ENCODE measurements at regions of chr2 and their contacts with region 1.

Region 1: GRCh38 chr2:70301344-70302194 is at the start of gene FAM136A:
- DNase-seq: peak; percentile 63 to 89 (median 77)
- H3K4me3 ChIP-seq: peak within 1 kb of the TSS; percentile 69 to 99 (median 92)
- H3K27ac ChIP-seq: peak within 1 kb of the TSS in 58 of 59 donors; percentile 13 to 94 (median 82)
- H3K27me3 ChIP-seq: no peaks in the 10 kb centered on the region
- CTCF ChIP-seq: peak; percentile 74 to 99 (median 94)
- total RNA-seq, gene FAM136A: 9.5 to 27.5 (median 18.9) TPM

Region 2: DNA sequence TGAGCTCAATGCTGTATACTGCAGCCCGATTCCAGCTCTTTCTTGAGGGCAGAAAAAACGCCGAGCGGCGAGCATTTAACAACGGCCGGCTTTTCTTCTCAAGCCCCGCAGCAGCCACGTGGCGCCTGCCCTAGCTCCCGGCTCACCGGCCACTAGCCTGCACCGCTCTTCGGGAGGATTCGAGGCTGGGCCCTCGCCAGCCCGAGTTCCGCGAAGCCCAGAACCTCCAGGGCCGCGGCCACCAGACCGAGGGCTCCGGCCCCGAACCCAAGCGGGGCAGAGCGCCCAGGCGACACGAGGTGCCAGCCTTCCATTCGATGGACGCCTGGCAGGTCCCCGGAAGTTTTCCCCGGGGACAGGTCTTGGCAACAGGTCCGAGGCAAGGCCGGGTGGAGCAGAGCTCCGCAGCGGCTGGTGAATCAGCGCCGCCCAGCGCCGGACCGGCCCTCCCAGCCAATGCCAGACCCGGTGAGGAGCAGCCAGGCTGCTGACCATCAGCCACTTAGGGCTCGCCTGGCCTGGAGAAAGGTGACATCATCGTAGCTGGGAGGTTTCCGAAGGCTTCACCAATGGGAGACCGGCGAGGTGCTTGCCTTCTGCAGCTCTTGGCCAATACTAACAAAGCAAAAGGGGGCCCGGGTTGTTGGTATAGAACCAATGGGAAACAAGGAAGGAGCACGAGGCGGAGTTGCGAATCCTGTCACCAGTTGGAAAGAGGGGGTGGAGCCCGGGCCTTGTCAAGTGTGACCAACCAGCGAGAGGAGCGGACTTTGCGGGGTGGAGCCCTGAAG is 387.2 kb before region 1 on chr2:
- intact Hi-C with region 1: loop called (anchors 2 to 5 kb)
- DNase-seq: peak; percentile 91 to 100 (median 100)
- H3K4me3 ChIP-seq: peak overlapping the region; percentile 60 to 99 (median 87)
- H3K27ac ChIP-seq: peak overlapping the region; percentile 89 to 100 (median 99)
- H3K27me3 ChIP-seq: no peaks in the 10 kb centered on the region
- CTCF ChIP-seq: peak in 53 of 56 donors; percentile 13 to 75 (median 52)

Region 3: GRCh38 chr2:70142590-70143313 is 158.8 kb before region 1 on chr2:
- intact Hi-C with region 1: loop called in 1 of 2 experiments (anchors 5 kb)
- DNase-seq: peak; percentile 89 to 96 (median 94)
- H3K4me3 ChIP-seq: peak overlapping the region; percentile 43 to 88 (median 75)
- H3K27ac ChIP-seq: peak overlapping the region; percentile 90 to 100 (median 100)
- H3K27me3 ChIP-seq: no peaks in the 10 kb centered on the region
- CTCF ChIP-seq: peak; percentile 92 to 100 (median 97)

Region 4: DNA sequence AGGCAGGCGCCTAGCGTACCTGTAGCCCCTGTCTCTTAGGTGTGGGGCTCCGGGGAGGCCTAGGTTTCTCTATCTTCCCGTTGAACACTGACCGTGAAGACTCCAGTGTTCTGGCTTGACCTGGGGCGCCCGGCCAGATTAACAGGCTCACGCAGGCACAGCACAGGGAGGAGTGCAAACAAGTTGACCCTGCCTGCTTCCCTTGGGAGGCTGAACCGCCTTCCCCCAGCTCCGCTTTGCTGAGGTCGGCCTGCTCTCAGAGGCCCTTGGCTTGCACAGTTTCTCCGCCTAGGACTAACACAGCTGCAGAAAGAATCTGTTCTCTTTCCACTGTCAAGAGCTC is 43.1 kb before region 1 on chr2:
- intact Hi-C with region 1: loop called in 1 of 2 experiments (anchors 5 kb)
- DNase-seq: peak in 7 of 10 donors; percentile 26 to 50 (median 41)
- H3K4me3 ChIP-seq: peak overlapping the region; percentile 53 to 99 (median 82)
- H3K27ac ChIP-seq: peak overlapping the region; percentile 40 to 97 (median 91)
- H3K27me3 ChIP-seq: no peaks in the 10 kb centered on the region
- CTCF ChIP-seq: no peak

Region 5: GRCh38 chr2:70616168-70616694 is 314.7 kb after region 1 on chr2:
- intact Hi-C with region 1: loop called (anchors 2 to 10 kb)
- DNase-seq: no peak
- H3K4me3 ChIP-seq: no peak overlapping the region
- H3K27ac ChIP-seq: no peak overlapping the region
- H3K27me3 ChIP-seq: peaks cover 0 to 3% (median 0%) of the 10 kb centered on the region in 45 donors
- CTCF ChIP-seq: no peak

Region 6: DNA sequence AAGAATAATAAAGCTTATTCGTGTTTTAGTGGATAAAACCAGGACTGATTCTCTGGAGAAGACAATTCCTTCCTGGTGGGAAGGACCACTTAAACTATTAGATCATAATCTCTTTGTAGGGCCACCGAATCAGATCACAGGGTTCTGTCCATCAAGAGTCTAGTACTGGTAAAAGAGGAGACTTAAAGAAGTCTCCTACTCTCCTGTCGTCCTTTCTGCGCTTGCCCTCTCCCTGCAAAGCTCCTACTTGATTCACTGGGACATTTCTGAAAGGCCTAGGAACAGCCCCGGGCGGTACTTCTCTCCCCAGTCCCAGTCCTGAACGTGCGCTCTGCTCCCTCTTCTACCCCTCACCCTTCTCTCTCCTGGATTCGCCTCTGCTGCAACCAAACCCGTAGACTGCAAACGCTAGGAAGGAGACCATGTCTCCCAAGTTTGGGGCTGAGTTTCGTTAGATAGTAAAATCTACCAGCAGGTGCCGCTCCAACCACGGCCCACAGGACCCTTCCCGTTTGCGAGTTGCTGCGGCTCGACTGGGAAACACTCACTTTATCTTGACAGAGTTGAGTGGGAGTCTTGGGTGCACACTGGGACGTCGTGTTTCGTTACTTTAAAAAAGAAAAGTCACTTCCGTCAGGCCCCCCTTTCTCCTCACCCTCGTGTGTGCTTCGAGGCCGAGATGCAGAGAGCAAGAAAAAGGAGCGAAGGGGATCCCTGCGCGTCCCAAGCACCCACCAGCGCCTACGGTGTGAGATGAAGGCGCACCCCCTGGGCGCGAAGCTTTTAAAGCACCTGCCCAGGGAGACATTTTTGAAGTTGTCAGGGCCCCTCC is 488.0 kb after region 1 on chr2:
- intact Hi-C with region 1: loop called in 1 of 2 experiments (anchors 10 kb)
- DNase-seq: peak; percentile 57 to 82 (median 72)
- H3K4me3 ChIP-seq: peak overlapping the region in 55 of 59 donors; percentile 3 to 62 (median 43)
- H3K27ac ChIP-seq: no peak overlapping the region
- H3K27me3 ChIP-seq: peaks cover 0 to 80% (median 40%) of the 10 kb centered on the region in 45 donors
- CTCF ChIP-seq: peak in 55 of 56 donors; percentile 44 to 85 (median 71)